Ovary (tissue), 10 donors: ENCODE measurements at regions of chr17 and their contacts with region 1.

Region 1: DNA sequence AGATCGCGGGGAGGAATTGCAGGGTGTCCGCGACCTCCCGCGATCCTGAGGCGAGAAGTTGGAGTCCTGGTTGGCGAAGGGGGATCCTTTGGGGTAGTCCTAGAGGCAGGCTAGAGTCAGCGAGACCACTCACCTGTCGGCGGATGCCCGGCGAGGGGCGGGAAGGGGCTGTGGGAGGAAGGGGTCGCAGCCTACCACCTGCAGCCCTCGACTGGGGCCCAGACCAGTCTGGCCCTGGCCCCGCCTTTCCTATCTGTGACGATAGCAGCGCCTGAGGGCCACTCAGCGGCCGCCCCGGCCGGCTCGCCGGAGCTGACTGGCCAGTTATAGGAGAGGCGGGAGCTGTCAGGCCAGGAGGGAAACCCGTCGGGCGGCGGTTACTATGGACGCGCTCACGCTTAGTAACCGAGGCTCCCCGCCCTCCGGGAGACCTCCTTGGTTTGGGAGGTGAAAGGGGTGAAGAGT is at the start of gene TEKT3:
- DNase-seq: peak; percentile 79 to 90 (median 84)
- H3K4me3 ChIP-seq: peak within 1 kb of the TSS; percentile 50
- H3K27ac ChIP-seq: no peak within 1 kb of the TSS
- H3K4me1 ChIP-seq: peaks cover 2% of the 10 kb centered on the region
- H3K27me3 ChIP-seq: no peaks in the 10 kb centered on the region
- CTCF ChIP-seq: no peak
- EP300 ChIP-seq: no peak
- POLR2A ChIP-seq: no peak
- total RNA-seq, gene TEKT3: 0.72 to 3.6 (median 1.6) TPM

Region 2: GRCh38 chr17:14761052-14761385 is 580.4 kb before region 1 on chr17:
- intact Hi-C with region 1: no loop called
- DNase-seq: no peak
- H3K4me3 ChIP-seq: no peak overlapping the region
- H3K27ac ChIP-seq: no peak overlapping the region
- H3K4me1 ChIP-seq: no peaks in the 10 kb centered on the region
- H3K27me3 ChIP-seq: no peaks in the 10 kb centered on the region
- CTCF ChIP-seq: no peak
- EP300 ChIP-seq: no peak
- POLR2A ChIP-seq: no peak

Region 3: GRCh38 chr17:15262291-15263205 is 78.9 kb before region 1 on chr17:
- intact Hi-C with region 1: loop called in 1 of 4 experiments (anchors 5 kb)
- DNase-seq: peak; percentile 86 to 91 (median 90)
- H3K4me3 ChIP-seq: peak overlapping the region; percentile 71
- H3K27ac ChIP-seq: peak overlapping the region; percentile 93 to 94
- H3K4me1 ChIP-seq: peaks cover 15% of the 10 kb centered on the region
- H3K27me3 ChIP-seq: no peaks in the 10 kb centered on the region
- CTCF ChIP-seq: peak in 1 of 3 donors; percentile 41
- EP300 ChIP-seq: peak; percentile 25
- POLR2A ChIP-seq: peak; percentile 82